A549 (cell line): ENCODE measurements at regions of chr10 and their contacts with region 1.

Region 1: DNA sequence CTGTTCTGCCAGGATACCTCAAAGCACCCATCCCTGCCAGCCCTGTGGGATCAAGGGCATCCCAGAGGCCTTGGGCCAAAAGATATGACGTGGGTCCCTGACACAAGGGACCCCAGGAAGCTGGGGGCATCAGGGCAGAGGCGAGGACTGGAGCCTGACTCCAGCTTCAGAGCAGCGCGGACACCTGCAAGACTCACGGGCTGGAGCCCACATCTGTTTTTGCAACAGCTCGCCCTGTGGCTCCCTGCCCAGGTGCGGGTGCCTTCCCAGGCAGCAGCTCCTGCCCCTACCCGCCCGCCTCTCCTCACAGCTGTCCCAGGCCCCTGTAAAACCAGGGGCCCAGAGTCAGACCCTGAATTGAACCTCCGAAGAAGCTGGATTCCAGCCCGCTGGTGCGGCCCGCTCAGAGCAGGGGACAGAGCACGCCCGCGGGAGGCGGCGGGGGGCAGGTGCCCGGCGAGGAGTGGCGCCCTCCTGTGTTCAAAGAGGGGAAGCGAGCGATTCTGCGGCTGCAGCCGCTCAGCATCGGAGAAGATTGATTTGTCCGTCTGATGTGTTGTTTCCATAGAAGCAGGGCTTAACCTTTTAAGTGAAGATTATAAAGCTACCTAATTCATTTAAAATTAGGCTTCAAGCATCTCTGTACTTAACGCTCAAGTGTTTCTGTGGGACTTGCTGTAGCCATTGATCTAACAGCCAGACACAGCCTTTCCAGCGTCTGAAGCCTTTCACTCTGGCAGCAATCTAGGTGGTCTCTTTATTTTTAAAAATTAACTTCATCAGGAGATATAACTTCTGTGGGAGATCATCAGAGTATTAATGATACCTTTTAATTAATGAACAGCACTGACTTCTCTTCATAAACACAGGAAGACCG is 88.4 kb downstream of the BEND7 start:
- DNase-seq: peak; percentile 32 to 69
- ATAC-seq: peak; percentile 87 to 92
- H3K4me3 ChIP-seq: peak overlapping the region; percentile 45
- H3K27ac ChIP-seq: peak overlapping the region; percentile 20 to 61; a peak in 4 of 6 replicates
- H3K4me1 ChIP-seq: peaks cover 6% of the 10 kb centered on the region; the same call in 1 of the 3 replicates
- CTCF ChIP-seq: peak; percentile 91
- EP300 ChIP-seq: no peak
- POLR2A ChIP-seq: no peak
- RAD21 ChIP-seq: peak; percentile 48 to 66

Region 2: DNA sequence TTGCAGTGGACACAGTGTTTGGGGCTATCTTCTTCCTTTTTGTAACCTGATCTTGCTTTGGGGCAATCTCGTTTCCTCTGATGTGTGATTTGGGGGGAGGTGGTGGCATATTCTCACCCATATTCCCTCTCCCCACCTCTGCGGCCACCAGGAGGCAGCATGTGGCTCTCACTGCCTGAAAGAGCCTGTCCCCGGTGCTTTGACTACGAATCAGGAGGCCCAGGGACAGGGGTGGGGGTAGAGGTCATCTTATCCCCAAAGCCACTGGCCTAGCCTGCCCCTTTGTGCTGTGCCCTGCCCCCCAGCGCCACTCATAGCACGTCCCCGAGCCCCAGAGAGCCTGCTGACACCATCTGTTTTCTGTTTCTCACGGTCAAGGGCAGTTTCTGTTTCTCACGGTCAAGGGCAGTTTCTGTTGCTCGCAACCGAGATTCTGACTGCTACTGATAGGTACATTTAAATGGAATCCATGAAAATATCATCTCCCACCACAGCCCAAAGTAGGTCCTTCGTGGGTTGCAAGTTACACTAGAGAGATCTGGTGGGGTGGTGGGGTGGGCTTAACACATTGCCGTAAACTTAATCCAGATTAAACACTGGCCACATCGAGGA is 168.8 kb before region 1 on chr10:
- CTCF ChIA-PET with region 1: no interaction called
- POLR2A ChIA-PET with region 1: no interaction called
- DNase-seq: peak; percentile 40 to 53
- ATAC-seq: peak; percentile 82 to 93
- H3K4me3 ChIP-seq: no peak overlapping the region
- H3K27ac ChIP-seq: no peak overlapping the region
- H3K4me1 ChIP-seq: peaks cover 7% of the 10 kb centered on the region; the same call in 2 of the 3 replicates
- CTCF ChIP-seq: peak; percentile 33; the same call in 2 of the 3 replicates
- EP300 ChIP-seq: no peak
- POLR2A ChIP-seq: no peak
- RAD21 ChIP-seq: peak; percentile 22 to 24; a peak in 1 of 5 replicates

Region 3: DNA sequence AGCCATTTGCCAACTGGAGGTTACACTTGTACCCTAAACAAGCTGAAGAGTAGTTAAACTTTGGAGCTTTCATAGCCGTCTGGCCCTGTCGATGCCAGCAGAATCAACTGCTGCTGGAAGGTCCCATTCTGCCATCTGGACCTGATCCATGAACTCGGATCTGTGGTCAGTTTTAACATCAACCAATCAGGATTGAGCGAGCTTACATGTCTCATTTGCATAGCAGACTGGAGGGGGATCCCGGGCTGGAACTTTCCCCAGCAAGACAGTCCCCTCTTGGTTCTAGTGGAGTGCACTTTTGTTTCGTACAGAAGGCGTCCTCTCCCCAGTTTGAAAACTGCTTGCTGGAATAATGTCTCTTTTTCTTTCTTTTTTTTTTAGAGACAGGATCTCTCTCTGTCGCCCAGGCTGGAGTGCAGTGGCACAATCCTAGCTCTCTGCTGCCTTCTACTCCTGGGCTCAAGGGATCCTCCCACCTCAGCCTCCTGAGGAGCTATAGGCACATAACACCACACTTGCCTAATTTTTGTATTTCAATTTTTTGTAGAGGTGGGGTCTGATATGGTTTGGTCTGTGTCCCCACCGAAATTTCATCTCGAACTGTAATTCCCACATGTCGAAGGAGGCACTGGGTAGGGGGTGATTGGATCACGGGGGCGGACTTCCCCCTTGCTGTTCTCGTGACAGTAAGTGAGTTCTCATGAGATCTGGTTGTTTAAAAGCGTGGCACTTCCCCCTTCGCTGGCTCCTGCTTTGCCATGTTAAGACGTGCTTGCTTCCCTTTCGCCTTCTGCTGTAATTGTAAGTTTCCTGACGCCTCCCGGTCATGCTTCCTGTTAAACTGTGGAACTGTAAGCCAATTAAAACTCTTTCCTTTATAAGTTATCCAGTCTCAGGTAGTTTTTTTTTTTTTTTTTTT is 49.6 kb before region 1 on chr10:
- CTCF ChIA-PET with region 1: interaction called, 15 read pairs
- POLR2A ChIA-PET with region 1: no interaction called
- DNase-seq: no peak
- ATAC-seq: no peak
- H3K4me3 ChIP-seq: no peak overlapping the region
- H3K27ac ChIP-seq: no peak overlapping the region
- H3K4me1 ChIP-seq: no peaks in the 10 kb centered on the region
- CTCF ChIP-seq: no peak
- EP300 ChIP-seq: no peak
- POLR2A ChIP-seq: no peak
- RAD21 ChIP-seq: no peak

Region 4: DNA sequence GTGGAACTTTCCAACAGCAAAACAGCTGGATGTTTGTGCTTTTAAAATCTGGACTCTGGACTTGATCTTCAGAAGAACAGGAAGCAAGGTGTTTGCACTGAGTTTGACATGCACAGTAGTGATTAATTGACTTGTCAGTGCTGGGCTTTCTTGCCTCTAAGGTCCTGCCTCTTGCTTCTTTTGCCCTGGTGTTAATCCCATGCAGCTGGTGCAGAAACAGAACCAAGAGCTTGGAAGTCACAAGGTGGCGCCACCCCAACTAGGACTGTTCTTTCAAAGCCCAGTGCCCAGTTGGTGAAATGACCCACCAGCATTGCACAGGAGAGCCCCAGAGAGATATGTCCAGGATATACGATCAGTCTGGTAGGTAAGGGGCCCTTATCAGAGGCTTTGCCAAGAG is 25.5 kb before region 1 on chr10:
- CTCF ChIA-PET with region 1: interaction called, 11 read pairs
- POLR2A ChIA-PET with region 1: no interaction called
- DNase-seq: peak in 1 of 2 experiments; percentile 42
- ATAC-seq: peak in 1 of 2 experiments; percentile 69; a peak in 3 of 6 replicates
- H3K4me3 ChIP-seq: no peak overlapping the region
- H3K27ac ChIP-seq: no peak overlapping the region
- H3K4me1 ChIP-seq: no peaks in the 10 kb centered on the region
- CTCF ChIP-seq: no peak
- EP300 ChIP-seq: no peak
- POLR2A ChIP-seq: no peak
- RAD21 ChIP-seq: 0 out of 5 replicates have a peak, but pooled peaks of 1 of the 2 experiments have one; percentile 21

Region 5: DNA sequence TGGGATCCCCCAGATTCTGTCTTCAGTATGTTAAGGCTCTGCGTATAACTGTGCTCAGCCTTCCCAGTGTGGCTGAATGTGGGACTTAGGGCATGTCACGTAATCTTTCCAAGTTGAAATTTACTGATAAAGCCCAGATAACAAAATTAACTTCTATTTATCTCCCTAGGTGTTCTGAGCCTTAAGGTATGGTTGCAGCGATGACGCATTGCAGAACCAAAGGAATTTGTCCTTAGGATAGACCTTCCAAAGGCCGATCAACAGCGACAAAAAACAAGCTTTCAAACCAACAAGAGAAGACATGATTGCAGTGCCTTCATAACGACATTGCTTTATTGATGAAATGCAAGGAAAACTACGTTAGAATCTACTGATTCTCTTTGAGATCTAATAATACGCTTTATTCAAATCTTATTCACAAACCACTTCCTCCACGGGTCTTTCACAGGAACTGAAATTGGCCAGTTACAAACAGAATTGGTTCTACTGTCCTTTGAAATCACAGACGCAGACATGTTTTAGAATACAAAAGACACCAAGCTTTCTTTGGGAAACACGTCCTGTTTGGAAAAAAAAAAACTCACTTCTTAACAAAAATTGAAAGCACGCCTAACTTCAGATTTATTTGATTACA is 17.7 kb before region 1 on chr10:
- CTCF ChIA-PET with region 1: interaction called, 19 read pairs
- POLR2A ChIA-PET with region 1: no interaction called
- DNase-seq: no peak
- ATAC-seq: no peak
- H3K4me3 ChIP-seq: no peak overlapping the region
- H3K27ac ChIP-seq: no peak overlapping the region
- H3K4me1 ChIP-seq: no peaks in the 10 kb centered on the region
- CTCF ChIP-seq: no peak
- EP300 ChIP-seq: no peak
- POLR2A ChIP-seq: no peak
- RAD21 ChIP-seq: no peak

Region 6: GRCh38 chr10:13457958-13458686 is 17.7 kb after region 1 on chr10:
- CTCF ChIA-PET with region 1: interaction called, 16 read pairs
- POLR2A ChIA-PET with region 1: no interaction called
- DNase-seq: no peak
- ATAC-seq: no peak
- H3K4me3 ChIP-seq: no peak overlapping the region
- H3K27ac ChIP-seq: no peak overlapping the region
- H3K4me1 ChIP-seq: no peaks in the 10 kb centered on the region
- CTCF ChIP-seq: no peak
- EP300 ChIP-seq: no peak
- POLR2A ChIP-seq: no peak
- RAD21 ChIP-seq: no peak

Region 7: GRCh38 chr10:13470270-13470669 is 29.8 kb after region 1 on chr10:
- CTCF ChIA-PET with region 1: interaction called, 11 read pairs
- POLR2A ChIA-PET with region 1: no interaction called
- DNase-seq: no peak
- ATAC-seq: peak in 1 of 2 experiments; percentile 54; a peak in 2 of 6 replicates
- H3K4me3 ChIP-seq: no peak overlapping the region
- H3K27ac ChIP-seq: no peak overlapping the region
- H3K4me1 ChIP-seq: no peaks in the 10 kb centered on the region
- CTCF ChIP-seq: no peak
- EP300 ChIP-seq: no peak
- POLR2A ChIP-seq: no peak
- RAD21 ChIP-seq: no peak

Region 8: DNA sequence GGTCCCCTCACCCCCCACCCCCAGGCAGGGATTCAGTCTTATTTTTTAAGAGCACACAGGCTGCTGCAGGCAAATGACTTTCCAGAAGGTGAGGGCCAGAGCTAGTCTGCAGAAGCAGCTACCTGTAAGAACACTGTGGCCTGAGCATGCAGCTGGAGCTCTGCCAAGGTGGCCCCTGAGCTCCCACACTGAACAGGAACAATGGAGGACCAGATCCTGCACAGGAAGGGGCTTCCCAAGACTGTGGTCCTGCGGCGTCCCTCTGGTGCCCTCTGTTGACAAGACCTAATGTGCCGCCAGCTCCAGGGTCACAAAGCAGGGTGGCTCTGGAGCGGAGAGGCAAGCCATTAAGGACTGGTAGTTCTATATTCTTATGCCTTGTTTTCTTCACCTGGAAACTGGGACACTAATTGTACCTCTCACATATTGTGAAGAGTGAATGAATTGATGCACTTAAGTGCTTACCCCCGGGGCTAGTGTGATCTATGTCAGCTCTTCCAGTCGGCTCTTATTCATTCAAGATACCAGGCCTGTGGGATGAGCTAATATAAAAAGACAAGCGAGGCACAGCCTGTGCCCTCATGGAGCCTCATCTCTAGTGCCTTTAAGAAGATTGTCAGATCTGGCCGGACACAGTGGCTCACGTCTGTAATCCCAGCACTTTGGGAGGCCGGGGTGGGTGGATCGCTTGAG is 96.4 kb after region 1 on chr10:
- CTCF ChIA-PET with region 1: interaction called, 13 read pairs
- POLR2A ChIA-PET with region 1: no interaction called
- DNase-seq: peak; percentile 70 to 75
- ATAC-seq: peak; percentile 98 to 99
- H3K4me3 ChIP-seq: no peak overlapping the region
- H3K27ac ChIP-seq: peak overlapping the region in 1 of 2 experiments; percentile 50; a peak in 2 of 6 replicates
- H3K4me1 ChIP-seq: no peaks in the 10 kb centered on the region
- CTCF ChIP-seq: peak; percentile 75
- EP300 ChIP-seq: no peak
- POLR2A ChIP-seq: no peak
- RAD21 ChIP-seq: peak; percentile 71 to 75